ENCODE measurements at regions of chr1 and their contacts with region 1.

Region 1: GRCh38 chr1:117857434-117857833 is 72.0 kb downstream of the GDAP2 start:
- DNase-seq: no peak
- H3K4me3 ChIP-seq: no peak overlapping the region
- H3K27ac ChIP-seq: no peak overlapping the region
- H3K4me1 ChIP-seq: no peaks in the 10 kb centered on the region
- H3K27me3 ChIP-seq: no peaks in the 10 kb centered on the region
- CTCF ChIP-seq: no peak
- POLR2A ChIP-seq: no peak

Region 2: GRCh38 chr1:116226017-116226416 is 1631.4 kb before region 1 on chr1:
- intact Hi-C with region 1: loop called (anchors 10 kb)
- DNase-seq: no peak
- H3K4me3 ChIP-seq: no peak overlapping the region
- H3K27ac ChIP-seq: no peak overlapping the region
- H3K4me1 ChIP-seq: no peaks in the 10 kb centered on the region
- H3K27me3 ChIP-seq: no peaks in the 10 kb centered on the region
- CTCF ChIP-seq: no peak
- POLR2A ChIP-seq: no peak

Region 3: GRCh38 chr1:117631359-117632160 is 225.9 kb before region 1 on chr1:
- intact Hi-C with region 1: no loop called
- DNase-seq: no peak
- H3K4me3 ChIP-seq: no peak overlapping the region
- H3K27ac ChIP-seq: no peak overlapping the region
- H3K4me1 ChIP-seq: no peaks in the 10 kb centered on the region
- H3K27me3 ChIP-seq: no peaks in the 10 kb centered on the region
- CTCF ChIP-seq: no peak
- POLR2A ChIP-seq: no peak

Region 4: DNA sequence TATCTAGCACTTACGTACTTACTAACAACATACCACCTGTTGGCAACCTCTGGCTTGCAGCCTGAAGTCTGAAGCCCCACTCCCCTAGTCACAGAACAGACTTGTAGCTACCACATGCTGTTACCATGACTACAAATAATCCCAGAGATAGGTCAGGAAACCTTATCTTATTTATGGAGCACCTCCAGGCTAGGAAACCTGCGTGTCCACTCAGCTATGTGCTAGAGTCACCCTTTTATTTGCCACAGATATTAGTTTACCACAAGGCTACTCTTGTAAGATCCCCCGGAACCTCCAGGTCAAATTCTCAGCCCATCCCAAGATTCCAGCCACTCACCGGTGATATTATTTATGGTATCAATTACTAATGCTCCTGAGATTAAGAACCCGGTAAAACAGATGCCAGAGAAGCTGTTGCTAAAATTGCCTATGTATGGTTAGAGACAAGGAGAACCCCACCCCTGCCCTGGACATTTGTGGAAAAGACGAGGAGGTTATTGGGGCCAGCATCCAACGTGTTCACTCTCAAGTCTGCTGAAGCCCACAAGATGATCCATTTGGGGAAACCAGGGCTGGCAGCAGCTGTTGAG is 1014.2 kb after region 1 on chr1:
- intact Hi-C with region 1: no loop called
- DNase-seq: no peak
- H3K4me3 ChIP-seq: no peak overlapping the region
- H3K27ac ChIP-seq: no peak overlapping the region
- H3K4me1 ChIP-seq: no peaks in the 10 kb centered on the region
- H3K27me3 ChIP-seq: no peaks in the 10 kb centered on the region
- CTCF ChIP-seq: no peak
- POLR2A ChIP-seq: no peak